ENCODE measurements at regions of chr10 and their contacts with region 1.

Region 1: GRCh38 chr10:17128261-17128660 is 1.4 kb downstream of the CUBN start:
- DNase-seq: no peak
- ATAC-seq: peak in 3 of 8 donors; percentile 19 to 64 (median 42)
- H3K4me3 ChIP-seq: no peak overlapping the region
- H3K27ac ChIP-seq: no peak overlapping the region
- H3K4me1 ChIP-seq: no peaks in the 10 kb centered on the region
- H3K27me3 ChIP-seq: no peaks in the 10 kb centered on the region
- CTCF ChIP-seq: no peak

Region 2: GRCh38 chr10:15227611-15228368 is 1900.5 kb before region 1 on chr10:
- intact Hi-C with region 1: loop called in 1 of 10 experiments (anchors 5 kb)
- DNase-seq: no peak
- ATAC-seq: no peak
- H3K4me3 ChIP-seq: no peak overlapping the region
- H3K27ac ChIP-seq: no peak overlapping the region
- H3K4me1 ChIP-seq: no peaks in the 10 kb centered on the region
- H3K27me3 ChIP-seq: no peaks in the 10 kb centered on the region
- CTCF ChIP-seq: no peak

Region 3: GRCh38 chr10:17527516-17528146 is 399.4 kb after region 1 on chr10:
- intact Hi-C with region 1: no loop called
- DNase-seq: peak in 1 of 2 donors; percentile 10
- ATAC-seq: peak in 5 of 8 donors; percentile 45 to 78 (median 70)
- H3K4me3 ChIP-seq: no peak overlapping the region
- H3K27ac ChIP-seq: peak overlapping the region in 6 of 10 donors; percentile 23 to 68 (median 49)
- H3K4me1 ChIP-seq: peaks cover 0 to 20% (median 0%) of the 10 kb centered on the region in 9 donors
- H3K27me3 ChIP-seq: no peaks in the 10 kb centered on the region
- CTCF ChIP-seq: no peak